GM12878 (cell line): ENCODE measurements at regions of chr11 and their contacts with region 1.

Region 1: DNA sequence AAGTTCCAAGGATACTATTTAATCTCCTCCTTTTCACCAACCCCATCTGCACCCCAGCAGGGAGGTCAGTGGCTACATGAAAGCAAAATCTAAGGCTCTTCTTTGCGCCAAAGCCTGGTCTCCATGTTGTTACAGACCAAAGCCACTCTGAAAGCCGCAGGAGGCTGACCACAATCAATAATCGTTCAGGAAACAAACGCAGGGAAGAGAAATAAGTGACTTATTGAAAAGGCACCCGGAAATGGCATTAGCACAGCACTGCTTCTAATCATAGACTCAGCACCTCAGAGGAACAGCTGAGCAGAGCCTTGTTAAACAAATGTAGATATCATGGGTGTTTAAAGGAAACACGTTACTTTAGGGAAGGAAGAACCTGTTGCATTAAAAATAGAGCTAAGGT is 183.9 kb downstream of the KIRREL3 start:
- DNase-seq: no peak
- ATAC-seq: no peak
- H3K4me3 ChIP-seq: no peak overlapping the region
- H3K27ac ChIP-seq: no peak overlapping the region
- H3K4me1 ChIP-seq: no peaks in the 10 kb centered on the region
- H3K27me3 ChIP-seq: peaks cover 3 to 6% of the 10 kb centered on the region in 2 experiments; a peak in 3 of 4 replicates
- CTCF ChIP-seq: no peak
- EP300 ChIP-seq: no peak
- POLR2A ChIP-seq: no peak
- RAD21 ChIP-seq: no peak

Region 2: DNA sequence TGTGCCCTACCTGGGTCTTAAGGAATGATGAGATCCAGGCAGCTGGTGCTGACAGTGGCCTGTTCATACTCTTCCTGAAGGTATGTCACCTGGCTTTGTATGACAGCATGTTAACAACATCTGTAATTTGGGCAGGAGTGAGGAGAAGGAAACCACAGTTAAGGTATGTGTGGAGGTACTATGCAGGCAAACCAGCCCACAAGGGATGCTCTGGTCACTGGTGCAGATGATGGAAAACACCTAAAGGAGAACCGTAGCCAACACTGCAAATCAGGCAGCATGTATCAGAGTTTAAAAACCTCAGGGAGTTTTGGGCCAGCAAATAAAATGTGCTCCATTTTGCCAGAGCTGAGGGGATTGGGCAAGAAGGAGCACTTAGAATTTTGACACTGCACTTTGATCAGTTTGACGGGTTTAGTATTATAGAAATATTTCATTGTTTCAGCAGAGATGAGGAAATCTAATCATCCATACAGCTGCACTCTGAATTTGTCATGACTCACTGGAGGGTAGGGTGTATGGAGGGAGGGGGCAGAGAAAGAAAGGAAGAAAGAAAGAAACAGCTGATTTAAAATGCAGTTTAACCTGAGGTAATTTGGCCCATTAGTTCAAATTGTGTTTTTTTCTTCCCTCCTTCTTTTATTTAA is 77.0 kb before region 1 on chr11:
- CTCF ChIA-PET with region 1: no interaction called
- POLR2A ChIA-PET with region 1: no interaction called
- RAD21 ChIA-PET with region 1: no interaction called
- SMC1A ChIA-PET with region 1: no interaction called
- in situ Hi-C with region 1: no loop called
- intact Hi-C with region 1: loop called (anchors 2 kb)
- DNase-seq: no peak
- ATAC-seq: peak; percentile 62
- H3K4me3 ChIP-seq: no peak overlapping the region
- H3K27ac ChIP-seq: no peak overlapping the region
- H3K4me1 ChIP-seq: peaks cover 21% of the 10 kb centered on the region
- H3K27me3 ChIP-seq: no peaks in the 10 kb centered on the region; a peak in 2 of 4 replicates
- CTCF ChIP-seq: no peak
- EP300 ChIP-seq: no peak
- POLR2A ChIP-seq: no peak
- RAD21 ChIP-seq: no peak

Region 3: DNA sequence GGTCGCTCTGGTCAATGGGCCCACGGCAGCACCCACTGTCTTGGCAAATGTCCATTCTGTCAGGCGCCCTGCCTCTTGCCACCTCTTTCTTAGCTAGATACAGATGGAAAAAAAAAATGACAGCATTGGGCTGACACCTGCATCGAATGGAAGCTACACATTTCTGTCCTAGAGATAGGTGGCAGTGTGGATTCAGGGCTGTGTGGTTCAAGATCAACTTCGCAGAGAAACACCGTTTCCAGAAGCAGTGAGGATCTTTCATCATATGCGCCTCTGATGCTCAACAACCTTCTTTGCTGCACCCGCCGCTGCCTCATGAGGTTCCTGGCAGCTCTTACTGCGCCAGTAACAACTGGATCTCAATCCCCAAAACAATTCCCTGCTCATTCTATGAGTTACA is 52.4 kb before region 1 on chr11:
- CTCF ChIA-PET with region 1: no interaction called
- POLR2A ChIA-PET with region 1: no interaction called
- RAD21 ChIA-PET with region 1: no interaction called
- SMC1A ChIA-PET with region 1: no interaction called
- in situ Hi-C with region 1: no loop called
- intact Hi-C with region 1: no loop called
- DNase-seq: no peak
- ATAC-seq: no peak
- H3K4me3 ChIP-seq: no peak overlapping the region
- H3K27ac ChIP-seq: no peak overlapping the region
- H3K4me1 ChIP-seq: no peaks in the 10 kb centered on the region
- H3K27me3 ChIP-seq: no peaks in the 10 kb centered on the region; a peak in 1 of 4 replicates
- CTCF ChIP-seq: 0 out of 6 replicates have a peak, but pooled peaks of 1 of the 3 experiments have one; percentile 11
- EP300 ChIP-seq: no peak
- POLR2A ChIP-seq: no peak
- RAD21 ChIP-seq: no peak